ENCODE measurements at regions of chr19 and their contacts with region 1.

Region 1: GRCh38 chr19:47225746-47226425 is 5.1 kb downstream of the BBC3 start:
- DNase-seq: peak; percentile 89 to 91
- ATAC-seq: peak; percentile 35 to 70
- H3K4me3 ChIP-seq: peak overlapping the region; percentile 89
- H3K27ac ChIP-seq: peak overlapping the region; percentile 97 to 98
- H3K4me1 ChIP-seq: peaks cover 36% of the 10 kb centered on the region
- CTCF ChIP-seq: peak; percentile 28; the same call in 1 of the 3 replicates
- EP300 ChIP-seq: peak in 1 of 2 experiments; percentile 51; a peak in 1 of 5 replicates
- POLR2A ChIP-seq: peak; percentile 100
- RAD21 ChIP-seq: peak in 1 of 2 experiments; percentile 30; a peak in 1 of 5 replicates

Region 2: DNA sequence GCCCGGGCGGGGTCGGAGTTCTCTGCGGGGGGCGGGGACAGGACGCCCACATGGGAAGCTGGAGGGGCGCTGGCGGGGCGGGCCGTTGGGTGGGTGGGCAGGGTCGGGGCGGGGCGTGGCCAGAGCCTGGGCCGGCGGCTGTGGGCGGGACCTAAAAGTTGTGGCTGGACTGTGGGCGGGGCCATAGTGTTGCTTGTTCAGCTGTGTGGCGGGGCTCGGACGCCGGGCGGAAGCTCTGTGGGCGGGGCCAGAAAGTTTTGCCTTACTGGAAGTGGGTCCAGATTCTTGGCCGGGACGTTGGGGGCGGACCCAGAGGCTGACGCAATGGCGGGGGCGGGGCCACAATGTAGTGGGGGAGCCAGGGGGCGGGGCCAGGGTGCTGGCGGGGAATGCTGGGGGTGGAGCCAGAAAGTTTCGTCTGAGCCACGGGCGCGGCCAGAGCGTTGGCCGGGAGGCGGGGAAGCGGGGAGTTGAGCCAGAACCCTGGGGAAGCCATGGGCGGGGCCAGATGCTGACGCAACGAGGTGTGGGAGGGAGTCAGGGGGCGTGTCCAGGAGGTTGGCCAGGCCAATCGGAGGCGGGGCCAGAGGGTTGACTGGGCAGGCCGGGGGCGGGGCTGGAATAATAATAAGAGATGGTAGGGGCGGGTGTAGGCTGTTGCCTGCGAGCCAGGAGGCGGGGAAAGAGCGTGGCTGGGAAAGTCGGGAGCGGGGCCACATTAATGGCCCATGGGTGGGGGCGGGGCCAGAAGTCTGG is 31.0 kb after region 1 on chr19:
- CTCF ChIA-PET with region 1: interaction called, 893 read pairs
- POLR2A ChIA-PET with region 1: interaction called, 67 read pairs
- DNase-seq: peak; percentile 99 to 100
- ATAC-seq: peak; percentile 71 to 85
- H3K4me3 ChIP-seq: peak overlapping the region; percentile 61
- H3K27ac ChIP-seq: peak overlapping the region; percentile 91 to 92
- H3K4me1 ChIP-seq: peaks cover 30% of the 10 kb centered on the region
- CTCF ChIP-seq: no peak
- EP300 ChIP-seq: no peak
- POLR2A ChIP-seq: no peak
- RAD21 ChIP-seq: no peak

Region 3: DNA sequence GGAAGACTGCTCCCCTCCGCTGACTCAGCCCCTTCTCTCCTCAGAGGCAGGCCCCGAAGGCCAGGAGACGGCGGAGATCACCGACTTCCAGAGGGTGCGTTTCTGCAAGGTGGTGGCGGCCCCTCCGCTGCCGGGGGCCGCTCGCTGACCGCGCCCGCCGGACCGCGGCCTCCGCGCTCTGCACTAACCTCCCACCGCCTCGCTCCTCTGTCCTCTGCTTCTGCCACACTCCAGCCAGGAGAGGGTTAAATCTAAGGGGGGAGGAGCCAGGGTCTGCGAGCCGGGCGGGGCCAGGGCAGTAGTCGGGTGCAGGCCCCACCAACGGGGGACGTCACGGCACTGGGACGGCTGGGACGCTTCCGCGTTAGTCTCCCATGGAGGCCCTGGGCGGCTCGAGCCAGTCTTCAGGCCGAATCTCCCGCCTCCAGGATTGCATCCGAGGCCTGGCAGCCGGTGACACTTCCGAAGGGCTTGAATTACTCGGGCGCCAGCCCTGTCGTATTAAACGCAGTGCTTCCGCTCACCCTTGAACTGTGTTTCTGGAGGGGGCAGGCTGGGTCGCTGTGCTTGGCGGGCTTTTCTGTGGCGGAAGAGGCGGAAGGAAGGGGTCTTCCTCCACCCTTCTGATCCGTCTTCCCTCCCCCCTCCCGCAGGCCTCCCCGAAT is 47.6 kb after region 1 on chr19:
- CTCF ChIA-PET with region 1: no interaction called
- POLR2A ChIA-PET with region 1: interaction called, 17 read pairs
- DNase-seq: peak; percentile 96
- ATAC-seq: peak; percentile 66 to 89
- H3K4me3 ChIP-seq: peak overlapping the region; percentile 59
- H3K27ac ChIP-seq: peak overlapping the region; percentile 80 to 90
- H3K4me1 ChIP-seq: peaks cover 15% of the 10 kb centered on the region
- CTCF ChIP-seq: no peak
- EP300 ChIP-seq: no peak
- POLR2A ChIP-seq: peak; percentile 41
- RAD21 ChIP-seq: no peak

Region 4: DNA sequence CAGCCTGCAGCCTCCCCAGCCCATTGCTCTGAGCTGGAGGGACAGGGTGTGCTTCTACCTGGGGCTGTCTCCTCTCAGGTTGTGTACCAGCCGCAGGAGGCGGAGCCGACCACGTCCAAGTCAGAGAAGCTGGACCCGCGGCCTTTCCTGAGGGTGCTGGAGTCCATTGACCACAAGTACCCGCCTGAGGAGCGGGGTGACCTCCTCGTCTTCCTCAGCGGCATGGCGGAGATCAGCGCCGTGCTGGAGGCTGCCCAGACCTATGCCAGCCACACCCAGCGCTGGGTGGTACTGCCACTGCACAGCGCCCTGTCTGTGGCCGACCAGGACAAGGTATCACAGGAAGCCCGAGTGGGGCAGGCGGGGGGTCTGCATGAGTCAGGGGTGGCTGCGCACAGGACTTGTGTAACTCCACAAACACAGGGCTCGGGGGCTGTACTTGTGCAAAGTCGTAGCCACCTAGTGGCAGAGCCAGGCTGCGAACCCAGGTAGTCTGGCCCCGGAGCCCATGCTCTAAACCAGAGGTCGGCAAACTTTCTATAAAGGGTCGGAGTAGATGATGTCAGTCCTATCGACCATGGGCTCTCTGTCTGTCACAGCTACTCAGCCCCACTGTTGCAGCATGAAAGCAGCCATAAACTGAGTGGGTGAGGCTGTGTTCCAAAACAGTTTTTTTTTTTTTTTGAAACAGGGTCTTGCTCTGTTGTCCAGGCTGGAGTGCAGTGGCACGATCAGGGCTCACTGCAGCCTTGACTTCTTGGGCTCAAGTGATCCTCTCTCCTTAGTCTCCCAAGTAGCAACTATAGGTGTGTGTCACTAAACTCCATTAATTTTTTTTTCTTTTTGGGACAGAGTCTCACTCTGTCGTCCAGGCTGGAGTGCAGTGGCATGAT is 132.1 kb after region 1 on chr19:
- CTCF ChIA-PET with region 1: no interaction called
- POLR2A ChIA-PET with region 1: no interaction called
- DNase-seq: peak; percentile 49 to 72
- ATAC-seq: peak; percentile 75 to 86
- H3K4me3 ChIP-seq: no peak overlapping the region
- H3K27ac ChIP-seq: no peak overlapping the region
- H3K4me1 ChIP-seq: no peaks in the 10 kb centered on the region
- CTCF ChIP-seq: peak; percentile 51; the same call in 2 of the 3 replicates
- EP300 ChIP-seq: no peak
- POLR2A ChIP-seq: no peak
- RAD21 ChIP-seq: peak; percentile 29 to 35; a peak in 1 of 5 replicates

Measured in A549 (cell line).